WTC11 (cell line): ENCODE measurements at regions of chr17 and their contacts with region 1.

Region 1: GRCh38 chr17:43846221-43846712 is 709 bp upstream of the CD300LG start:
- DNase-seq: peak; percentile 98
- ATAC-seq: peak; percentile 97
- H3K4me3 Mint-ChIP-seq: no peak overlapping the region
- H3K27ac Mint-ChIP-seq: no peak overlapping the region
- H3K4me1 Mint-ChIP-seq: peaks cover 16% of the 10 kb centered on the region
- H3K27me3 Mint-ChIP-seq: peaks cover 5% of the 10 kb centered on the region
- CTCF ChIP-seq: peak; percentile 95

Region 2: DNA sequence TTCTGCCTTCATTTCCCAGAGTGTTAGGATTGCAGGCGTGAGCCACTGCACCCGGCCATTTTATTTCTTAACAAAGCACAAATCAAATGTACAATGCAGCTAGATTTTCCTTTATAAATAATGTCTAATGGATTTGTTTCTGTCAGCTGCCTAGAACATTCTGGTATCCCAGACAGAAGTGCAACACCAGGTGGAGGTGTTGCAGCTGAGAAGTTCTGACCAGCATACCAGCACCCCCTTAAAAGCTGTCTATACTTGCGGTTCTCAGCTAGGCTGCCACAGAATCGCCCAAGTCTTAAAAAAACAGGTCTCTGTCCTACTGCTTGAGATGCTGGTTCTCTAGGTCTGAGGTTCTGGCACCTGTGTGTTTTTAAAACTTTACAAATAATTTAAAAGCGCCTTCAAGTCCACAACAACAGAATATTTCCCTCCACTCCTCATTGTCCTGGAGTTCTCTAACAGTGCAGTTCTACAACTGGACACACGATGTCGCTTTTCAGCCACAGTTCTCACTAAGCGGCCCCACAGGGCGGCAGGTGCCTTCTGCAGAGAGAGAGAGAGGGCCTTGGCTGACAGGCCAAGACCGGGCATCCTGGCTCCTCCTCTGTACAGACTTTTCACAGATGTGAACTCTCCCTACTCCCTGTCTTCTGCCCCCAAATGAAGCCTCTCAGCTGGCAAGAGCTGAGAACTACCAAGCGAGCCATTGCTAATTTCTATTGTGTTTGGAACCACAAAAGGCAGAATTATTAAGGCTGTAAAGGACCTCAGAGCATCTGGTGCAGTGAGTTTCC is 152.0 kb before region 1 on chr17:
- CTCF ChIA-PET with region 1: interaction called, 15 read pairs
- POLR2A ChIA-PET with region 1: no interaction called
- DNase-seq: peak; percentile 86
- ATAC-seq: peak; percentile 91
- H3K4me3 Mint-ChIP-seq: no peak overlapping the region
- H3K27ac Mint-ChIP-seq: no peak overlapping the region
- H3K4me1 Mint-ChIP-seq: peaks cover 17% of the 10 kb centered on the region
- H3K27me3 Mint-ChIP-seq: 0 out of 2 replicates have a peak, but pooled peaks cover 2% of the 10 kb centered on the region
- CTCF ChIP-seq: peak; percentile 81

Region 3: DNA sequence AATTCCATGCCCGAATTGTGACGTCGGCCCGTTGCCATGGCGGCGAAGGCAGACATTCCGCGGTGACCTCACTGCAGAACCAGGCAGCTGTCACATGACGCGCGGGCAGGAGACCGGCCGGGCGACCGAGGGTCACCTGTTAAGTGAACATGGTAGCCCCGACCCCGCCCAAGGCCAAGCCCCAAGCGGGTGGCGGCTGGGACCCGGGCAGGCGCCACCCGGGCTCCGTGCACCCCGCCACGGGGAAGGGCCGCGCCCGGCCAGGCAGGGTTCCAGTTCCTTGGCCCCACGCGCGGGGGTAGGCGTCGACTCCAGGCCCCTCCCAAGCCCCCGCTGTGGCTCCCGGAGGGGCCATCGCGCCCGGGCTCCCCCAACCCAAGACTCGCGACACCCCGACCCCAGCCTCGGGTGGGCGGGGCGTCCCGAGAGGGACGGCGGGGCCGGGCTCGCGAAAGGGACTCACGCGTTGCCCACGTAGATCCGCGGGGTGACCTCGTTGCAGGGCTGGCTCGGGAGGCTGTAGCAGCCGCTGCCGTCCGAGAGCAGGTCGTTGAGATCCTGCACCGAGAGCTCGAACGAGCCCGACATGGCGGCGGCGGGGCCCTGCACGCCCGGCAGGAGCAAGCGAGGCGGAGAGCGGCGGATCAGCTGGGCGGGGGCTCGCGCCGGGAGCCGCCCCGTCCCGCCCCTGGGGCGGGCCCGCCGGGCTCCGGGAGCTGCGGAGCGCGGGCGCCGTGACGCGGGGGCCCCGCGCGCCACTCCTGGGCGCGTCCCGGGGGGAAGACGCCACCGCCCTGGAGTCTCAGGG is 67.7 kb before region 1 on chr17 and contains the start of gene DUSP3:
- CTCF ChIA-PET with region 1: interaction called, 23 read pairs
- POLR2A ChIA-PET with region 1: interaction called, 7 read pairs
- DNase-seq: peak; percentile 96
- ATAC-seq: peak; percentile 84
- H3K4me3 Mint-ChIP-seq: peak within 1 kb of the TSS; percentile 81
- H3K27ac Mint-ChIP-seq: peak within 1 kb of the TSS; percentile 84
- H3K4me1 Mint-ChIP-seq: peaks cover 19% of the 10 kb centered on the region
- H3K27me3 Mint-ChIP-seq: peaks cover 24% of the 10 kb centered on the region
- CTCF ChIP-seq: no peak
- total RNA-seq, gene DUSP3: 28.4 to 31.5 TPM (median 30.0 TPM) in 3 replicates

Region 4: DNA sequence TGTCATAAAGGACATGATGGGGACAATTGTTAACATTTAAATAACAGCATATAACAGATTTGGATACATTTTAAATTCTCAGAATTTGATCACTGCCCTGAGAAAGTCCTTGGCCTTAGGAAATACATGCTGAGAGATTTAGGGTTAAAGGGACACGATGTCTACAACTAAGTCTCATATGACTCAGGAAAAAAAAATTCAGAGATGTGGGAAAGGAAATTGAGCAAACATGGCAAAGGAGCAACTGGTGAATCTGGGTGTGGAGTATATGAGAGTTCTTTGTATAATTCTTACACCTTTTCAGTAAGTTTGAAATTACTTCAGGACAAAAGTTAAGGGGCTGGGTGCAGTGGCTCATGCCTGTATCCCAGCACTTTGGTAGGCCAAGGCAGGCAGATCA is 31.6 kb before region 1 on chr17:
- CTCF ChIA-PET with region 1: interaction called, 78 read pairs
- POLR2A ChIA-PET with region 1: interaction called, 4 read pairs
- DNase-seq: no peak
- ATAC-seq: no peak
- H3K4me3 Mint-ChIP-seq: no peak overlapping the region
- H3K27ac Mint-ChIP-seq: 0 out of 2 replicates have a peak overlapping the region, but pooled peaks have one; percentile 1
- H3K4me1 Mint-ChIP-seq: peaks cover 24% of the 10 kb centered on the region
- H3K27me3 Mint-ChIP-seq: no peaks in the 10 kb centered on the region
- CTCF ChIP-seq: no peak

Region 5: GRCh38 chr17:43861024-43861621 is 14.9 kb after region 1 on chr17:
- CTCF ChIA-PET with region 1: interaction called, 43 read pairs
- POLR2A ChIA-PET with region 1: no interaction called
- DNase-seq: no peak
- ATAC-seq: no peak
- H3K4me3 Mint-ChIP-seq: no peak overlapping the region
- H3K27ac Mint-ChIP-seq: no peak overlapping the region
- H3K4me1 Mint-ChIP-seq: no peaks in the 10 kb centered on the region
- H3K27me3 Mint-ChIP-seq: 0 out of 2 replicates have a peak, but pooled peaks cover 4% of the 10 kb centered on the region
- CTCF ChIP-seq: no peak

Region 6: DNA sequence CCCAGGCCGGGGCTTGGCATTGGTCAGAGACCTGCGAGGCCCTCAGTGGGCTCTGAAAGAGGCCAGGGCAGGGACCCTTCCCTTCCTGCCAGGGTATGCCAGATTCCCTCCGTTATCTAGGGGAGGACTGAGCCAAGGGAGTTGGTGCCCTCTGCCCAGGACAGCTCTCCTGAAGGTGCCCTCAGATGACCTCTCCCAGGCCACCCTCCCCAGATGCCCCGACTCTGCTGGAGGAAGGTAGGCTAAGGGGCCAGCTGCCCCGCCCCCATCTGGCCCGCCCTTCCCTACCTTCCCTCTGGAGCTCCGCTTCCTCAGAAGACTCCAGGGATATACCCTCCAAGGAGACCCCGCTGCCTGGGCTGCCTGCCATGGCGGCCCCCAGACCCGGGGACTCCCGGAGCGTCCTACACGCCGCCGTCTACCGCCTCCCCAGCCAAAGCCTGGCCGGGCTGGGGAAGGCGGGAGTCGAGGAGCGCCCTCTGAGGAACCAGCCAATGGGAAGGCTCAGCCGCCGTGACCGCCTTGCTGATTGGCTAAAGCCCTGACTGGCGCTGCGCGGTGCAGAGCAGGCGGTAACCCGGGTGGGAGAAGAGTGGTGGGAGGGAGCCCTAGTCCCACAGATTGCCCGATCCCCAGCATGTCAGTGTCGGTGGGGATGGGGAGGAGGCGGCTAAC is 54.1 kb after region 1 on chr17:
- CTCF ChIA-PET with region 1: interaction called, 17 read pairs
- POLR2A ChIA-PET with region 1: no interaction called
- DNase-seq: peak; percentile 93
- ATAC-seq: peak; percentile 92
- H3K4me3 Mint-ChIP-seq: peak overlapping the region; percentile 75
- H3K27ac Mint-ChIP-seq: no peak overlapping the region
- H3K4me1 Mint-ChIP-seq: peaks cover 52% of the 10 kb centered on the region
- H3K27me3 Mint-ChIP-seq: peaks cover 32% of the 10 kb centered on the region
- CTCF ChIP-seq: no peak

Region 7: DNA sequence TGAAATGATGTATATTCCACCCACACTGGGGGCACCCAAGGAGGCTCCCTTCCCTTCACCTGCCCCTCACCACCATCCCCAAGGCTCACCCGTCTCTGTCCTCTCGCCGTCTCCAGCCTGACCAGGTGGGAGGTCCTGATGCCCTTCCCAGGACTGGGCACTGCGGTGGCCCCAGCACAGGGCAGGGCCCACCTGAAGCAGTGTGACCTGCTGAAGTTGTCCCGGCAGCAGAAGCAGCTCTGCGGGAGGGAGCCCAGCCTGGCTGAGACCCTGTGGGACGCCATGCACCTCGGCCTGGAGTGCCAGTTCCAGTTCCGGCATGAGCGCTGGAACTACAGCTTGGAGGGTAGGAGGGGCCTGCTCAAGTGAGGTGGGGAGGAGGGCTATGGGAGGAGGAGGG is 86.1 kb after region 1 on chr17:
- CTCF ChIA-PET with region 1: no interaction called
- POLR2A ChIA-PET with region 1: no interaction called
- DNase-seq: no peak
- ATAC-seq: no peak
- H3K4me3 Mint-ChIP-seq: no peak overlapping the region
- H3K27ac Mint-ChIP-seq: no peak overlapping the region
- H3K4me1 Mint-ChIP-seq: peaks cover 11% of the 10 kb centered on the region
- H3K27me3 Mint-ChIP-seq: peaks cover 43% of the 10 kb centered on the region
- CTCF ChIP-seq: no peak

Region 8: GRCh38 chr17:43967251-43967875 is 121.1 kb after region 1 on chr17:
- CTCF ChIA-PET with region 1: no interaction called
- POLR2A ChIA-PET with region 1: no interaction called
- DNase-seq: no peak
- ATAC-seq: no peak
- H3K4me3 Mint-ChIP-seq: no peak overlapping the region
- H3K27ac Mint-ChIP-seq: no peak overlapping the region
- H3K4me1 Mint-ChIP-seq: no peaks in the 10 kb centered on the region
- H3K27me3 Mint-ChIP-seq: peaks cover 3% of the 10 kb centered on the region
- CTCF ChIP-seq: no peak

Region 9: DNA sequence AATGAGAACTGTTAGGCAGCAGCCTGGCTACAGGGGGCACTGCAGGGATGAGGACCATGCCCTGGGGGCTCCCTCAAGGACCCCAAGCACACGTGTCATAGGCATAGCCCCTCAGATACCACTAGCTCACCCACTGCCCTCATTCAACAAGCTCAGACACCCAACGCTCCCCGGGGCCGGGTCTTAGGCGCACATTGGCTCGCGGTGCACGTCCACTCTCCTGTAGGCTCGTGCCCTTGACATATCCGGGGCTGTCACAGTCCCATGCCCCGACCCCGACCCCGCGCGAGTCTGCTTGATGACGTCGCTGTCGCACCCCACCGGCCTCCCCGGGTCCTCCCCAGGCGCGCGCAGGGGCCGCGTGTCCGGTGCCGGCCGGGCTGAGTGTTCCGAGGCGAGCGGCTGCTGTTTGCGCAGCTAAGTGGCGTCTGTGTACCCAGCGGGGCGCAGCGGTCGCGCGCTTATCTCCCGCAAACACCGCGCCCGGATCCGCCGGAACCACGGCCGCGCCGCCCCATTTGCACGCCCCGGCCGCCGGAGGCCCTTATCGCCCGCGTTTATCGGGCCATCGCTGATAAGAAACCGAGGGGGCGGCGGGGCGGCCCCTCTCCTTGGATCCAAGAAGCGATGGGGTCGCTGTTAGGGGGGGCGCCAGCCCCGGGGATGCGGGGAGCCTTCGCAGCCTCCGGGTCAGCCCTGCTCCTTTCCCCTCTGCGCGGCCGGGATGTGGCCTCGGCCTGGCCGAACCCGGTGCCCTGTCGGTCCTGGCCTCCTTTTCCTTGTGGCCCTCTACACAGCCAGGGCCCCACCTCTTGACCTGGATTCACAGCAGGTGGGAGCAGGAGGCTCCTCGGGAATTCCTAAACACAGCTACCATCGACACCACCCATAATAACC is 137.5 kb after region 1 on chr17:
- CTCF ChIA-PET with region 1: interaction called, 16 read pairs
- POLR2A ChIA-PET with region 1: no interaction called
- DNase-seq: peak; percentile 65
- ATAC-seq: peak; percentile 75
- H3K4me3 Mint-ChIP-seq: peak overlapping the region; percentile 69
- H3K27ac Mint-ChIP-seq: no peak overlapping the region
- H3K4me1 Mint-ChIP-seq: peaks cover 4% of the 10 kb centered on the region; the same call in 1 of the 2 replicates
- H3K27me3 Mint-ChIP-seq: peaks cover 24% of the 10 kb centered on the region
- CTCF ChIP-seq: peak; percentile 41; the same call in 1 of the 2 replicates